PC-3 (cell line): ENCODE measurements at regions of chr5 and their contacts with region 1.

Region 1: DNA sequence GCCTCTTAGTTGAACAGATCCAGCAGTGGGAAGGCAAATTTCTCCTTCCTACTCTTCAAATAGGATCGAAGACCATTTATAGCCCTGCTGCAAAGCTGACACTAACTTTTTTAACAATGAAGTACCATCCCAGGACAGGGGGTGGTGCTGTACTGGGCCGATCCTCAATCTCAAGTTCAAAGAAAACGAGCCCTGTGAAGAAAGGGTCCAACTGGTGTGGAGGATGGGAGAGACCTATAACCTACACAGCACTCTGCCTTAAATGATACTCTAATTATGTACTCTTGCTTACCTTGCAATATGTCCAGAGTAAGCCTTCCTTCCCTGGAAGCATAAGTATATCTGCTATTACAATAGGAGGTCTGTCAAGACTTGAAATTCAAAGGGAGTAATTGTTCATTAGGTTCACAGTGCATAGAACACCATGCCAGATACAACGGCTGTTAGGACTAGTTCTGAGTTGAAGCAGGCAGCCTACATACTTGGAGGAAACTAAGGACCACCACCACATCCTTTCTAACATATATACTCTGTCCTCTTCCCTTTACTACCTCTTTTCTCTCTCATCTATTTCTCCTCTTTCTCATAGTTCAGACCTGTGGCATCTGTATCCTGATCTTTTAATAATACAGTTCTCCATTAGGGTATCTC is 6.2 kb downstream of the ETF1 start:
- DNase-seq: no peak
- ATAC-seq: peak; percentile 38; the same call in 1 of the 2 replicates
- H3K4me3 ChIP-seq: no peak overlapping the region
- H3K27ac ChIP-seq: no peak overlapping the region
- H3K4me1 ChIP-seq: peaks cover 18% of the 10 kb centered on the region
- H3K27me3 ChIP-seq: no peaks in the 10 kb centered on the region
- CTCF ChIP-seq: peak; percentile 54

Region 2: DNA sequence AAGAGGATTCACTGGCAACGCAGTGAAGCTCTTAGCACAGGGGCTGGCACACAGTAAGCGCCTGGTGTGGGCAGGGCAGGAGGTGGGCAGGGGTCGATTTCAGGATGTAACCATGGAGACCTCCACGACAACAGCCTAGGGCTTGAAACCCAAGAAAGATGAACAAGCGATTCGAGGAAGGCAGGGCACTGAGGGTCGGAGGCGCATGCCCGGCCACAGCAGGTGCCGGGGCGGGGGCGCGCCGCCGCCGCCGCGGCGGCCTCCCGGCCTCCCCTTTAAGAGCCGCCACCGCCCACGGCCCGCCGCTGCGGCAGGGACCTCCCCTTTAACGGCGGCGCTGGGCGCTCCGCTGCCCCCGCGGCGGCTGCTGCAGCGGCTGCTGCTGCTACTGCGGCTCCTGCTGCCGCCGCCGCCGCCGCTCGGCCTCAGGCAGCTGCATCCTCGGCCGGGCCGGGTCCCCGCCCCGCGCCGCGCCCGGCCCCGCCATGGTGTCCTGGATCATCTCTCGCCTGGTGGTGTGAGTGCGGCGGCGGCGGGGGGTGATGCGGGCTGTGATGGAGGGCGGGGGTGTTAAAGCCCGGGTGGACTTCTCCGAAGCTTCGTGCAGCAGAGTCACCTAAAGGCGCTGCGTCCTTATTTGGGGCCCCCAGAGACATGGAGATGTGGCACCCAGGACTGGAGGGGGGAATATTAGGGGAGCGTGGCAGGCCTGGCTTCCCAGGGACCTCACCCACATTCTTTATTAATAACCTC is 97.9 kb before region 1 on chr5 and contains the start of gene REEP2:
- CTCF ChIA-PET with region 1: no interaction called
- POLR2A ChIA-PET with region 1: interaction called, 12 read pairs
- intact Hi-C with region 1: no loop called
- DNase-seq: peak; percentile 38
- ATAC-seq: peak; percentile 85
- H3K4me3 ChIP-seq: peak within 1 kb of the TSS; percentile 59
- H3K27ac ChIP-seq: no peak within 1 kb of the TSS
- H3K4me1 ChIP-seq: no peaks in the 10 kb centered on the region
- H3K27me3 ChIP-seq: no peaks in the 10 kb centered on the region
- CTCF ChIP-seq: no peak
- total RNA-seq, gene REEP2: 2.4 and 2.5 TPM in 2 replicates

Region 3: DNA sequence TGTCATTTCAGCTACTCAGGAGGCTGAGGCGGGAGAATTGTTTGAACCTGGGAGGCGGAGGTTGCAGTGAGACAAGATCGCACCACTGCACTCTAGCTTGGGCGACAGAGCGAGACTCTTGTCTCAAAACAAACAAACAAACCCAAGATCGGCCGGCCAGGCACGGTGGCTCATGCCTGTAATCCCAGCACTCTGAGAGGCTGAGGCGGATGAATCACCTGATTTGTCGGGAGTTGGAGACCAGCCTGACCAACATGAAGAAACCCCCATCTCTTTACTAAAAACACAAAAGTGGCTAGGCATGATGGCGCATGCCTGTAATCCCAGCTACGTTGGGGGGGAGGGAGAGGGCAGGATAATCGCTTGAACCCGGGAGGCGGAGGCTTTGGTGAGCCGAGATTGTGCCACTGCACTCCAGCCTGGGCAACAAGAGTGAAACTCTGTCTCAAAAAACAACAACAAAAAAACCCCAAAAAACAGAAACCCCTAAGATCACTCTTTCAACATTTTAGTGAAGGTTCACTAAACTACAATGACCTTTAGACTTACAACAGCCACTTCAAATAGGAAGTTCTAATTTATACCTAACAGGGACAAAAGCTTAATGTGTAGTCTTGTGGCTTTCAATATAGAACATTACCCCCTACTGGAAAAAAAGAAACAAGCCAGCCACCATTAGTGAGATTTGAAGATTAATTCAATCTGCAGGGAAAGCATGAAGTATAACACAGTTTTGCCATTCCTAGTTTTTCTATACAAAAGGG is 31.5 kb after region 1 on chr5:
- CTCF ChIA-PET with region 1: no interaction called
- POLR2A ChIA-PET with region 1: no interaction called
- intact Hi-C with region 1: no loop called
- DNase-seq: no peak
- ATAC-seq: no peak
- H3K4me3 ChIP-seq: no peak overlapping the region
- H3K27ac ChIP-seq: no peak overlapping the region
- H3K4me1 ChIP-seq: peaks cover 7% of the 10 kb centered on the region; the same call in 1 of the 2 replicates
- H3K27me3 ChIP-seq: no peaks in the 10 kb centered on the region
- CTCF ChIP-seq: 0 out of 2 replicates have a peak, but pooled peaks have one; percentile 22

Region 4: GRCh38 chr5:138663009-138663408 is 126.2 kb after region 1 on chr5:
- CTCF ChIA-PET with region 1: no interaction called
- POLR2A ChIA-PET with region 1: no interaction called
- intact Hi-C with region 1: no loop called
- DNase-seq: no peak
- ATAC-seq: no peak
- H3K4me3 ChIP-seq: no peak overlapping the region
- H3K27ac ChIP-seq: no peak overlapping the region
- H3K4me1 ChIP-seq: no peaks in the 10 kb centered on the region
- H3K27me3 ChIP-seq: no peaks in the 10 kb centered on the region; the same call in 1 of the 2 replicates
- CTCF ChIP-seq: no peak